ENCODE measurements at regions of chr15 and their contacts with region 1.

Region 1: GRCh38 chr15:65032801-65033537 is 3.5 kb upstream of the MTFMT start:
- DNase-seq: no peak
- H3K4me3 ChIP-seq: no peak overlapping the region
- H3K27me3 ChIP-seq: peaks cover 3% of the 10 kb centered on the region; the same call in 1 of the 2 replicates
- CTCF ChIP-seq: peak; percentile 75

Region 2: DNA sequence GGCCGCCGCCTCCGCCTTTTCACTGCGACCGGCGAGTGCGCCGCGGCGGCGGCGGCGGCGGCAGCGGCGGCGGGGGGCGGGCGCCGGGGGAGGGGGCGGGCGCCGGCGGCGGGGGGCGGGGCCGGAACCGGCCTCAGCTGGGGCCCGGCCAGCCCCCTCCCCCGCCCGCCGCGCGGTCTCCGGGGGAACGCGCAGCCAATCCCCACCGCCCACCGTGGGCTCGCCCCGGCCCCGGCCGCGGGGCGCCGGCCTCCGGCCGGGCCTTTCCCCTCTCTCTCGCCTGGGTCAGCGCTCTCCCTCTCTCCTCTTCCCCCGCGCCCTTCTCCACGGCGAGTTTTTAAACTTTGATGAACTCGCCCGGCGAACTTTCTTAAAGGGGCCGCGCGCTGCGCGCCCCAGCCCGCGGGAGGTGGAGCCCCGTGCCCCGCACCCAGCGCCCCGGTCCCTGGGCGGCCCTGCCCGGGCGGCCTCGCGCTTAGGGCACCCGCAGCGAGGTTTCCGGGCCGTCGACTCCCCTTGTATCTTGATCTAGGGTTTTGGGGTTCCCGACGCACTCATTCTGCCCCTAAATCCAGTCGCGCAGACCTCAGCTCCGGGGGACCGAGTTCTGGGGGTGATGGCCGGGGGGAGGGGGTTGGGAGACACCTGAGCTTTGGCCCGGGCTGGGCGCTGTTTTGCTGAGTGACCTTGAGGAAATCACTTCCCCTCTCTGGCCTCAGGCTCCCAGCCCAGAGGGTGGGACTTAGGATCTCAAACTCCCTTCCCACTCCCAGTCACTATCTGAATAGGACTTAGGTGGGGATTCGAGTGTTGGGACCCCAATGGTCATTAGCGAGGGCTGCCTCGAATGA is 257.2 kb before region 1 on chr15 and contains the start of gene RBPMS2:
- CTCF ChIA-PET with region 1: no interaction called
- POLR2A ChIA-PET with region 1: no interaction called
- DNase-seq: no peak
- H3K4me3 ChIP-seq: peak within 1 kb of the TSS; percentile 40
- H3K27me3 ChIP-seq: peaks cover 17% of the 10 kb centered on the region
- CTCF ChIP-seq: no peak
- polyA plus RNA-seq, gene RBPMS2: 0.45 and 0.67 TPM in 2 replicates

Region 3: GRCh38 chr15:65049418-65049840 is 16.5 kb after region 1 on chr15:
- CTCF ChIA-PET with region 1: interaction called, 31 read pairs
- POLR2A ChIA-PET with region 1: no interaction called
- DNase-seq: peak; percentile 65
- H3K4me3 ChIP-seq: peak overlapping the region; percentile 17
- H3K27me3 ChIP-seq: no peaks in the 10 kb centered on the region
- CTCF ChIP-seq: no peak

Region 4: DNA sequence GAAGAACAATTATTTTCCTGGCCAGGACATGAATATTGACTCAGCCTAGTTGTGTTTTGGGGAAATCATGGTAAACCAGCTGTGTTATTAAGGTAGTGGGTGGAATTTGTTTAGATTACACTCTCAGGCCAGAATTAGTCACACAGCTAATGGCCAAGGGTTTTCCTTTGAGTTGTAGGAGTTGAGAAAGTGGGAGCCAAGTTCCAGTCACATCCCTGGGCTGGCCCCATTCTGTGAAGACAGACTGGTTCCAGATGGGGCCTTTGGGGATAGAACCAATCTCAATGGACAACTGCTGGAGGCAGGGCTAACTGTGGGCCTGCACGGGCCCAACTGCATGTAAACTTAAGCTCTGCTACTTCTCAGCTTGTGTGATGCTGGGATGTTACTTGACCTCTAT is 36.2 kb after region 1 on chr15:
- CTCF ChIA-PET with region 1: interaction called, 11 read pairs
- POLR2A ChIA-PET with region 1: no interaction called
- DNase-seq: peak; percentile 91
- H3K4me3 ChIP-seq: no peak overlapping the region
- H3K27me3 ChIP-seq: peaks cover 20% of the 10 kb centered on the region
- CTCF ChIP-seq: no peak

Region 5: GRCh38 chr15:65077981-65078352 is 45.0 kb after region 1 on chr15:
- CTCF ChIA-PET with region 1: interaction called, 45 read pairs
- POLR2A ChIA-PET with region 1: no interaction called
- DNase-seq: no peak
- H3K4me3 ChIP-seq: no peak overlapping the region
- H3K27me3 ChIP-seq: peaks cover 15% of the 10 kb centered on the region
- CTCF ChIP-seq: peak; percentile 81

Region 6: DNA sequence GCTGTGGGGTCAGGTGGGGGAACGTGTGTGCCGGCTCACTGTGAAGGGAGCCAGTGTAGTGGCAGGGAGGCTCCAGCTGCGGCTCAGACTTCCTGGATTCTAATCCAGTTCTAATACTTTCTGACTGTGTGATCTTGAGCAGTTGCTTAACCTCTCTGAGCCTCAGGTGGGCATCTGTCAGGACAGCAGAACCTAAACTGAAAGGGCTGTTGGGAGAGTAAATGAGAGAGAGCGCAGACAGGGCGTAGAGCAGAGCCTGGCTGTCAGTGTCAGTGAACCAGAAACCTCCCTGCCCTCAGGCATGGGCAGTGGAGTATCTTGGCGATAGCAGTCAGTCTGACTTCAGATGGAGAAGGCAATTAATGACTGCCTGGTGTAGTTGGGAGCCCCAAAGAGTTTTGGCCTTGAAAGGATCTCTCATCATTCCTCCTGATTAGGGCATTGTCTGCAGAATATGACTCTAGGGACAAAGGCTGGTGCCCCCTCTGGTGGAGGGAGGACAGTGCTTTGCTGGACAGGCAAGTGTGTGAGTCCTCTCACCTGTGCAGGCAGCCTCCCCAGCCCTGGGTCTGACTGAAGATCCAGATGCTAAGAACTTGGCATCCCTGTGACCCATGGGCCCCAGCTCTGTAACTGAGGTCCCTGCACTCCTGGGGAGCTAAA is 53.2 kb after region 1 on chr15:
- CTCF ChIA-PET with region 1: interaction called, 21 read pairs
- POLR2A ChIA-PET with region 1: no interaction called
- DNase-seq: no peak
- H3K4me3 ChIP-seq: no peak overlapping the region
- H3K27me3 ChIP-seq: peaks cover 9% of the 10 kb centered on the region
- CTCF ChIP-seq: peak; percentile 55

Region 7: GRCh38 chr15:65176056-65176455 is 143.1 kb after region 1 on chr15:
- CTCF ChIA-PET with region 1: no interaction called
- POLR2A ChIA-PET with region 1: no interaction called
- DNase-seq: no peak
- H3K4me3 ChIP-seq: no peak overlapping the region
- H3K27me3 ChIP-seq: no peaks in the 10 kb centered on the region
- CTCF ChIP-seq: no peak

Measured in BJ (cell line).